ENCODE measurements at regions of chr6 and their contacts with region 1.

Region 1: DNA sequence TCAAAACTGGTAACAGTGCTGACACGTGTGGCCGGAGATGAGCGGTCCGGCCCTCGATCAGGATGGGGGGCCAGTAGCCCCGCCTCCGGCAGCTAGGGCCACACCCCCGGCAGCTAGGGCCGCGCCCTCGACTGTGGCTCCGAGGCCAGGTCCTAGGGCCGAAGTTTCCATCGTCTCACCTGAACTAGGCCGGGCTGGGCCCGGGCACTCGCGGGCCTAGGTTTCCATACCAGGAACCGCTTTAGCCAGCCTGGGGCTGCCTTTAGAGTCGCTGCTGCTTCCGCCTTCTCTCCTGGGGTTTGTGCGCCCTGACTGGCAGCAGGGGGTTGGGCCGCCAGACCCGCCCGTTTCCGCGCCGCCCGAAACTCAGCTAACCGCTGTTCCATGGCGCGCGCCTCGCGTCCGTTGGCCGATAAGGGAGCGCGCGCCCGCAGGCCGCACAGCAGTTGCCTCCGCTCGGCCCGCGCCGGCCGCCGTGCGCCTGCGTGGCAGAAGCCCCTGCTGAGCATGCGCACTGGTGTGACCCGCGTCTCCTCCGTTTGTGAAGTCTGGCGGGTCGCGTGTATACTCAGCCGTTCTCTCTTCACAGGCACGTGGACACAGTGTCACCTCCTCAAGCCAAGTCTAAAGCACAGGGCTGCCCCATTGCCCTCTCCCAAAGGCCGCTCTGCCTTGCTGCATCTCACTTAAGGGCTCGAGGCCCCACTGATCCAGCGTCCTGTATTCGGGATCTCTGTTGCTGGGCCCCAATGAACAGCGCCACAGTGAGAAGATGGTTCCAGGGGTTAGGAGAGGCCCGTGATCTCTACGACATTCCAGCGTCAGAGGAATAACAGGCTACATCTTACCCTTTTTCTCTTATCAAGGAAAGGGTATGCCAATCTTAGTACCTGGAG is at the start of gene SAYSD1:
- DNase-seq: peak; percentile 55 to 95
- H3K4me3 ChIP-seq: peak within 1 kb of the TSS; percentile 68 to 75
- H3K27ac ChIP-seq: peak within 1 kb of the TSS; percentile 89 to 91
- H3K4me1 ChIP-seq: peaks cover 0 to 9% of the 10 kb centered on the region in 2 donors
- H3K27me3 ChIP-seq: no peaks in the 10 kb centered on the region
- CTCF ChIP-seq: no peak
- total RNA-seq, gene SAYSD1: 2.1 TPM

Region 2: DNA sequence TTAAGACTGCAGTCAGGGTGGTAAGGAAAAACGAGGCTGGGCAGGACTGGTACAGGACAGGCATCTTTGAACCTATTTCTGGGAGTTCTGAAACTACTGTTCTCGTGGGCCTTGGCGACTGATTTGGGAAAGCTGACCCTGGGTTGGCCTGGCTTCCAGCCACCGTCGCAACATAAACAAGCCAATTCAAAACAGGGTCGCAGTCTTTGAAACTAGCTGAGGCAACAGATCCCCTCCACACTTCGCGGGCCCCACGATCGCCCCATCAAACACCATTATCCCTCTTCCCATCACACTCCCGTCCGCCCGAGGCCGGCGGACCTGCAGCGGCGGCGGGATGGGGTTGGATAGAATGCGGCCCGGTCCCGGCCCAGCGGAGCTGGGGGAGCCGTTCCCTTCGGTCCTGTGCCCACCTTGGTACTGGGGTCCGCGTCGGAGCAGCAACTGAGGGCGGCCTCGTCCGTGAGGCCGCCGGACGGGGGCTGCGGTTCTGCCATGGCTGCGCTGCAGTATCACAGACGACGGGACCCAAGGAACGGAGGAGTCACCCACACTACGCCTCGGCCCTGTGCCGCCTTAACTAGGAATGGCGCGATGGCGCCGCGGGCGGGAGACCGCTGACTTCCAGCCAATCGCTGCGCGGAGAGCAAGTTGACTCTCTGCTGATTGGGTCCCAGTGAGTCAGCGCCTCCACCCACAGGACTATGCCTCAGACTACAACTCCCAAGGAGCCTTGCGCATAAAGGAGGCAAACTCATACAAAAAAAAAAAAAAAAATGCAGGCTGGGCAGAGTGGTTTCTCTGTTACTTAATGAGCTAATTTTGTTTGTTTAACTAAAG is 412.2 kb before region 1 on chr6 and contains the start of gene GLO1:
- intact Hi-C with region 1: loop called (anchors 10 kb)
- DNase-seq: peak; percentile 94 to 99
- H3K4me3 ChIP-seq: peak within 1 kb of the TSS; percentile 80 to 88
- H3K27ac ChIP-seq: peak within 1 kb of the TSS; percentile 90 to 91
- H3K4me1 ChIP-seq: no peaks in the 10 kb centered on the region
- H3K27me3 ChIP-seq: no peaks in the 10 kb centered on the region
- CTCF ChIP-seq: no peak
- total RNA-seq, gene GLO1: 32.6 TPM

Region 3: GRCh38 chr6:38915205-38915925 is 199.6 kb before region 1 on chr6:
- intact Hi-C with region 1: no loop called
- DNase-seq: no peak
- H3K4me3 ChIP-seq: no peak overlapping the region
- H3K27ac ChIP-seq: no peak overlapping the region
- H3K4me1 ChIP-seq: no peaks in the 10 kb centered on the region
- H3K27me3 ChIP-seq: no peaks in the 10 kb centered on the region
- CTCF ChIP-seq: no peak

Region 4: DNA sequence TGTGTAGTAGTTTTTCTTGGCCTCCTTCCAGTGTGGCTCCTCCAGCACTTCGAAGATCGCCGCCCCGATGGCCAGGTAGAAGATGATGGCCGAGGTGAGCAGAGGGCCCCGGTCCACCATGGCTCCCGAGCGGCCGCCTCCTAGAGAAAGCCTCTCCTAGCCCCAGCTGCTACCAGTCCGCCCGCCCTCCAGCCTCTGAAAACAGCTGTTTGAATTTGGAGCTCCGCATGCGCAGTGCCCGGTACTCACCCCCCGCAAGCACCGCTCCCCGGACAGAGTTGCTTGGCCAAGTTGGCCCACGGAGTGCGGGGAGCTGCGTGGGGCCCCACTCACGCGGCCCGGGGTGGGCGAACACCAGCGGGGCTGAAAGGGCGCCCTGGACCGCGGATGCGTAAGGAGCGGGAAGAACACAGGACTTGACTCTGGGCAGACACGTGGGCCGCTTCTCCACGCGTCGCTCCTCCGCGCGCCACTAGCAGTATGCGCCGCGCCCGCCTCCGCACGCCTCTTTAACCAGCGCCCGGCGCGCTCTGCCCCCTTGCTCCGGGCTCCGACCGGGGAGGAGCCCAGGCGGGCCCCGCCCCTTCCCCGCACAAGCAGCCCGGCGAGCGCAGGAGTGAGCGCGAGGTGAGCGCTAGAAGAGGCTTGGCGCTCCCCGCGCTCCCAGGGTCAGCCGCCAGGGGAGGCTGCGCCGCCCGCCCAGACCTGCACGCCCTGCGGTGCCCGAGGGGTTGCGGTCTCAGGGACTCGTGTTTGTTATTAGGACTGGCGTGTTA is 114.2 kb after region 1 on chr6 and contains the start of gene KCNK5:
- intact Hi-C with region 1: loop called (anchors 5 kb)
- DNase-seq: peak in 1 of 2 donors; percentile 77
- H3K4me3 ChIP-seq: peak within 1 kb of the TSS; percentile 45 to 69
- H3K27ac ChIP-seq: no peak within 1 kb of the TSS
- H3K4me1 ChIP-seq: peaks cover 6 to 8% of the 10 kb centered on the region in 2 donors
- H3K27me3 ChIP-seq: no peaks in the 10 kb centered on the region
- CTCF ChIP-seq: peak; percentile 36 to 57 (median 48)
- total RNA-seq, gene KCNK5: 2.6 TPM